Naive thymus-derived CD4-positive, alpha-beta T cell (primary cell): ENCODE measurements at regions of chr5 and their contacts with region 1.

Region 1: GRCh38 chr5:5481206-5481605 is 58.7 kb downstream of the ICE1 start:
- DNase-seq: peak in 6 of 9 donors; percentile 32 to 59 (median 44)
- ATAC-seq: peak; percentile 85
- H3K4me3 ChIP-seq: no peak overlapping the region
- H3K4me3 Mint-ChIP-seq: peak overlapping the region in 9 of 10 donors; percentile 29 to 78 (median 53)
- H3K27ac ChIP-seq: peak overlapping the region; percentile 28
- H3K27ac Mint-ChIP-seq: peak overlapping the region; percentile 59 to 92 (median 80)
- H3K4me1 ChIP-seq: peaks cover 7 to 13% of the 10 kb centered on the region in 2 donors
- H3K4me1 Mint-ChIP-seq: peaks cover 14 to 40% (median 26%) of the 10 kb centered on the region in 7 donors
- H3K27me3 ChIP-seq: no peaks in the 10 kb centered on the region
- H3K27me3 Mint-ChIP-seq: no peaks in the 10 kb centered on the region

Region 2: DNA sequence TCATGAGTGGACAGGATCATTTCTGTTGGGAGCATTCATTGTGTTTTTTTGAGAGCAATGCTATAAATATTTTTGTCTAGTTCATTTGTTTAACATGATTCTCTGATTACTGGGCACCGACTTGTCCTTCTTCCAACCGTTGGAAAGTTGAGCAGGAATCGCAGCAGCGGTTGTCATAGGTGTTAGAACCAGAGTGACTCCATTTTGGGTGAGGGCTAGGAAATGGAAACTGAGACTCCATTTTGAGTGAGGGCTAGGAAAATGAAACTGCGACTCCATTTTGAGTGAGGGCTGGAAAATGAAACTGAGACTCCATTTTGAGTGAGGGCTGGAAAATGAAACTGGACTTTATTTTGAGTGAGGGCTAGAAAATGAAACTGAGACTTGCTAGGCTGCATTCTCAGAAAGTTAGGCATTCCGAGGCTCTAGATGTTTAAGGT is 41.9 kb after region 1 on chr5:
- CTCF ChIA-PET with region 1: no interaction called
- POLR2A ChIA-PET with region 1: no interaction called
- intact Hi-C with region 1: loop called in 1 of 2 experiments (anchors 2 kb)
- DNase-seq: peak in 7 of 9 donors; percentile 31 to 58 (median 50)
- ATAC-seq: peak; percentile 75
- H3K4me3 ChIP-seq: peak overlapping the region; percentile 48
- H3K4me3 Mint-ChIP-seq: peak overlapping the region in 9 of 10 donors; percentile 43 to 83 (median 70)
- H3K27ac ChIP-seq: no peak overlapping the region
- H3K27ac Mint-ChIP-seq: peak overlapping the region; percentile 0 to 90 (median 75)
- H3K4me1 ChIP-seq: peaks cover 0 to 3% of the 10 kb centered on the region in 2 donors
- H3K4me1 Mint-ChIP-seq: peaks cover 1 to 25% (median 17%) of the 10 kb centered on the region in 7 donors
- H3K27me3 ChIP-seq: no peaks in the 10 kb centered on the region
- H3K27me3 Mint-ChIP-seq: peaks cover 0 to 3% (median 0%) of the 10 kb centered on the region in 5 donors